ENCODE measurements at regions of chr15 and their contacts with region 1.

Region 1: GRCh38 chr15:79015416-79015815 is 70.6 kb upstream of the CTSH start:
- DNase-seq: no peak
- H3K4me3 ChIP-seq: no peak overlapping the region
- H3K27ac ChIP-seq: no peak overlapping the region
- H3K4me1 ChIP-seq: no peaks in the 10 kb centered on the region
- H3K27me3 ChIP-seq: no peaks in the 10 kb centered on the region
- CTCF ChIP-seq: no peak
- EP300 ChIP-seq: no peak
- POLR2A ChIP-seq: no peak

Region 2: DNA sequence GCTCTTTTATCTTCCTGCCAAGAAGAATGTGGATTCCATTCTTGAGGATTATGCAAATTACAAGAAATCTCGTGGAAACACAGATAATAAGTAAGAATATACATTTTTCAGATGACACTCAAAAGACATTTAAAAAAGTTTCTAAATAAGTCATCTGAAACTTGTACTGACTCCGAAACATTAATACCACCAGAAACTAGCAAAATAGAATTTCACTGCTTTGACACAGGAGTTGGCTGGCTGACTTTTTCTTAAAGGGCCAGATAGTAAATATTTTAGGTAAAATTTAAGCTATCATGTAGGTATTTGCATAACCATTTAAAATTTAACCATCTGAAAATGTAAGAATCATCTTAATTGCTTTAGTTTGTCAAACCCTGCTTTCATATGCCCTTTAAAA is 121.9 kb before region 1 on chr15:
- intact Hi-C with region 1: no loop called
- DNase-seq: no peak
- H3K4me3 ChIP-seq: no peak overlapping the region
- H3K27ac ChIP-seq: no peak overlapping the region
- H3K4me1 ChIP-seq: peaks cover 0 to 2% (median 0%) of the 10 kb centered on the region in 4 donors
- H3K27me3 ChIP-seq: no peaks in the 10 kb centered on the region
- CTCF ChIP-seq: no peak
- EP300 ChIP-seq: no peak
- POLR2A ChIP-seq: no peak

Region 3: GRCh38 chr15:79170256-79170664 is 154.8 kb after region 1 on chr15:
- intact Hi-C with region 1: loop called (anchors 10 kb)
- DNase-seq: peak in 1 of 2 donors; percentile 30
- H3K4me3 ChIP-seq: no peak overlapping the region
- H3K27ac ChIP-seq: no peak overlapping the region
- H3K4me1 ChIP-seq: peaks cover 5 to 8% (median 7%) of the 10 kb centered on the region in 4 donors
- H3K27me3 ChIP-seq: peaks cover 0 to 56% (median 3%) of the 10 kb centered on the region in 3 donors
- CTCF ChIP-seq: no peak
- EP300 ChIP-seq: no peak
- POLR2A ChIP-seq: no peak